BJ (cell line): ENCODE measurements at regions of chr14 and their contacts with region 1.

Region 1: GRCh38 chr14:34671716-34672115 is 41.8 kb upstream of the SNX6 start:
- DNase-seq: no peak
- H3K4me3 ChIP-seq: no peak overlapping the region
- H3K27me3 ChIP-seq: no peaks in the 10 kb centered on the region
- CTCF ChIP-seq: no peak

Region 2: DNA sequence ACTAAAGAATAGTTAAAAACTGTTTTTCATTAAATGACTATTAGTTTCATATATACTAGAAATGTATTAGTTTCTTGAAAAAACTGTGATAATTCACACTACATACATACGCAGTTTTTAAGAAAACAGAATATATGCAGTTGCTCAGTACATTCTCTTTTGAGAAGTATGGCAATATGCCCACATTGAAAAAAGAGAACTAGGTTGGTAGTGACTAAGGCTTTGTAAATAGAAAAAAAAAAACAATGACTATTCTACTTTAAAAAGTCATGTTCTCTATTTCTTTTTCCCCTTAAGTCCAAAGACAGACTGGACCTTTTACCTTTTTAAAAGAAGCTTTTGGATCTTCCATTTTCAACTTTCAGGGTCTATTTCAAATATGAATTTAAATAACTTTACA is 66.7 kb before region 1 on chr14:
- CTCF ChIA-PET with region 1: no interaction called
- POLR2A ChIA-PET with region 1: no interaction called
- DNase-seq: no peak
- H3K4me3 ChIP-seq: no peak overlapping the region
- H3K27me3 ChIP-seq: no peaks in the 10 kb centered on the region
- CTCF ChIP-seq: no peak

Region 3: GRCh38 chr14:34619471-34619870 is 52.2 kb before region 1 on chr14:
- CTCF ChIA-PET with region 1: no interaction called
- POLR2A ChIA-PET with region 1: no interaction called
- DNase-seq: no peak
- H3K4me3 ChIP-seq: no peak overlapping the region
- H3K27me3 ChIP-seq: no peaks in the 10 kb centered on the region
- CTCF ChIP-seq: no peak

Region 4: GRCh38 chr14:34714320-34715126 is 42.8 kb after region 1 on chr14 and contains the start of gene CFL2:
- CTCF ChIA-PET with region 1: interaction called, 19 read pairs
- POLR2A ChIA-PET with region 1: no interaction called
- DNase-seq: no peak
- H3K4me3 ChIP-seq: peak within 1 kb of the TSS; percentile 90
- H3K27me3 ChIP-seq: no peaks in the 10 kb centered on the region
- CTCF ChIP-seq: no peak
- polyA plus RNA-seq, gene CFL2: 81.4 and 206 TPM in 2 replicates